ENCODE measurements at regions of chr9 and their contacts with region 1.

Region 1: GRCh38 chr9:113210815-113211214 is 10.3 kb downstream of the FKBP15 start:
- DNase-seq: no peak
- ATAC-seq: no peak
- H3K4me3 ChIP-seq: no peak overlapping the region
- H3K27ac ChIP-seq: no peak overlapping the region
- H3K4me1 ChIP-seq: no peaks in the 10 kb centered on the region
- H3K27me3 ChIP-seq: no peaks in the 10 kb centered on the region
- CTCF ChIP-seq: no peak

Region 2: GRCh38 chr9:113164536-113165300 is 46.1 kb before region 1 on chr9:
- intact Hi-C with region 1: loop called in 1 of 2 experiments (anchors 5 kb)
- DNase-seq: peak; percentile 65 to 82
- ATAC-seq: peak; percentile 71 to 88 (median 79)
- H3K4me3 ChIP-seq: no peak overlapping the region
- H3K27ac ChIP-seq: no peak overlapping the region
- H3K4me1 ChIP-seq: peaks cover 13% of the 10 kb centered on the region
- H3K27me3 ChIP-seq: no peaks in the 10 kb centered on the region
- CTCF ChIP-seq: no peak

Region 3: DNA sequence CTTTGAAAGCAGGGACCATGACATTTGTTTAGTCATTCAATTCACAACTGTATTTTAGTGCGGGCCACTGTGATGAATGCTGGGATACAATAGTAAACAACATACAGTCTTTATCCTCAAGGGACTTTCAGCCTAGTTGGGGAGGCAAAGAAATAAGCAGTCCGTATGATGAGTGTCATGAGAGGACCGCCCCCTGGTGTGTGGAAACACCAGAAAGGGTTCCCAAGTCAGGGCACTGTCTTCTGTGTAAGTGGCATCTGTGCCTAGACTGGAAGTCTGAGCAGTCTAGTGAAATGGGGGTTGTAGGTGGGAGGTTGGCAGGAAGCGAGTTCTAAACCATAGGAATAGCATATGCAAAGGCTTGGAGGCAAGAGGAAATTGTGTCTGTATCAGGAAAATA is 206.6 kb after region 1 on chr9:
- intact Hi-C with region 1: no loop called
- DNase-seq: no peak
- ATAC-seq: no peak
- H3K4me3 ChIP-seq: no peak overlapping the region
- H3K27ac ChIP-seq: no peak overlapping the region
- H3K4me1 ChIP-seq: no peaks in the 10 kb centered on the region
- H3K27me3 ChIP-seq: no peaks in the 10 kb centered on the region
- CTCF ChIP-seq: no peak

Measured in psoas muscle (tissue), 8 donors.